PC-3 (cell line): ENCODE measurements at regions of chr14 and their contacts with region 1.

Region 1: DNA sequence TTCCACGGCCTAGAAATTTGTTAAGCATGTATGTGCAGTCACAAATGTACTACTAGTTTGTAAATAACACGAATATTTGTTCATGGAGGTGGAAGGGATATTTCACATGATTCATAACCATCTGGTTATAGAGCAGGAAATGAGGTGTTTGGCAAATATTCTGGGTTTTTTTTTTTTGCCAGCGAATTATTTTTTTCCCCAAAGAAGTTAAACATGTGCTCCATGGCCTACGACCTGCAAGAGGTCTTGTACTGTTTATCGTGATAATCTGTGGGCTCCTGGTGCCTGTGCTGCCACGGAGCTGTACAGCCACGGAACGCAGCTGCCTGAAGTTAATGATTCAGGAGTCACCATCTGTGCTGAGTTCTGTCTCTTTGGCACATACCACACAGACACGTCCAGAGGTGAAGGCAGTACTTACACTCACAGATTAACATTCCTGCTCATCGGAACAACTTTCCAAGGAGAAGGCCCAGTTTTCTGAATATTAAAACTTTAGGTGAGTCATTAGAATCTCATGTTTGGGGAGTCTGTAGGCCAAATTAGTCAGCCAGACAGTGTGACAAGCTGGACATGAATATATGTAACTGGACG is 156.3 kb downstream of the TMX1 start:
- DNase-seq: peak; percentile 99
- ATAC-seq: peak; percentile 48
- H3K4me3 ChIP-seq: peak overlapping the region; percentile 32; the same call in 1 of the 2 replicates
- H3K27ac ChIP-seq: peak overlapping the region; percentile 98
- H3K4me1 ChIP-seq: peaks cover 61% of the 10 kb centered on the region
- H3K27me3 ChIP-seq: no peaks in the 10 kb centered on the region
- CTCF ChIP-seq: no peak

Region 2: DNA sequence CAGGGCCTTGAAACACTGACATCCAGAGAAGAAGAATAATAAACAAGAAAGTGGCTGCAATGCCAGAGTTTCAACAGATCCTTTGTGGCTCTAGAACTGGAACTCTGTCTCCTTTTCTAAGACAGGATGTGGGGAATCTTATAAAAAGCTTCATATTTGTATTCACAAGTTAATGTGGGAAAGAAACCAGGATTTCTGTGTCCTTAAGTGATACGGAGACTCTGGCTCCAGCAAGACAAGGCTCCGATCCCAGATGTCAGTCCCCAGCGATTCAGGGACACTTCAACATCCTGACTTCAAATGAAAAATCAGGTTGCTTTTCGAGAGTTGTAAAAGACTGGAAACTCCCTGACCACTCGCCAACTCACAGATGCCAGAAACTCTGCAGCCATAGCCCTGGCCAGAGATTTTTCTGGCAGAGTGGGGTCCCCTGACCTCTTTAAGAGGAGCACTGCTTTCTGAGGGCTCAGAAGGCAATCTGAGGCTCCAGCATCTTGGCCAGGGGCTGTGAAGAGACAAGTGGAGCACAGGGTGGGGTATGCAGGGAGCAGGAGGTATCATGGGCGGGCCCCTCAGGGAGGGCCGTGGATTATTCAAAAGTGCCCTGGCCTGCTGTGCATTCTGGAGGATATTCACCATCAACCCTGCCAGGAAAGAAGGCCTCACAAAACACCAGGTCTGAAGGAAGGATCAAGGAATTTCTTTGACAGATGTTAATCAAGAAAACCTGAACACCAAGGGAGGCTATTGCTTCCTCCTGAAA is 103.0 kb before region 1 on chr14:
- CTCF ChIA-PET with region 1: no interaction called
- POLR2A ChIA-PET with region 1: no interaction called
- intact Hi-C with region 1: loop called (anchors 2 kb)
- DNase-seq: no peak
- ATAC-seq: no peak
- H3K4me3 ChIP-seq: no peak overlapping the region
- H3K27ac ChIP-seq: no peak overlapping the region
- H3K4me1 ChIP-seq: peaks cover 12% of the 10 kb centered on the region
- H3K27me3 ChIP-seq: no peaks in the 10 kb centered on the region
- CTCF ChIP-seq: no peak

Region 3: GRCh38 chr14:51342241-51342691 is 54.1 kb before region 1 on chr14:
- CTCF ChIA-PET with region 1: no interaction called
- POLR2A ChIA-PET with region 1: no interaction called
- intact Hi-C with region 1: loop called (anchors 1 kb)
- DNase-seq: peak; percentile 97
- ATAC-seq: peak; percentile 97
- H3K4me3 ChIP-seq: no peak overlapping the region
- H3K27ac ChIP-seq: peak overlapping the region; percentile 92
- H3K4me1 ChIP-seq: peaks cover 18% of the 10 kb centered on the region
- H3K27me3 ChIP-seq: no peaks in the 10 kb centered on the region
- CTCF ChIP-seq: no peak

Region 4: DNA sequence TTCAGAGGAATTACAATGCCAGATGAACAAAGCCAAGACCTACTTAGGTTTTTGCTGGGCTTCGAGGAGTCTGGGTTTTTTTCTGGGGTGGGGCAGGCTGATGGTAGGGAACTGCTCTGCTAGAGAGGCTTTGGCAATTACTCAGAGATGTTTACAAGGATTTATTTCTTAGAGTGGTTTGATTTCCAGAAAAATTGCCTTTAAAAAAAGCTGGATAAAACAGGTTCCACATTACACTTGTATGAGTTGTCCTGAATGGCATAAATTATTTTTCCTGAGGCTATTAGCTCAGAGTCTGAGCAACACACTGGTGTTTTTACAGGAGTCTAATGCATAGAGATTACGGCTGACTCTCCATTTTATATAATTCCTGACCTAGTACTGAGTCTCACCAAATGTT is 136.8 kb after region 1 on chr14:
- CTCF ChIA-PET with region 1: no interaction called
- POLR2A ChIA-PET with region 1: interaction called, 6 read pairs
- intact Hi-C with region 1: loop called (anchors 1 kb)
- DNase-seq: peak; percentile 99
- ATAC-seq: peak; percentile 80
- H3K4me3 ChIP-seq: no peak overlapping the region
- H3K27ac ChIP-seq: peak overlapping the region; percentile 96
- H3K4me1 ChIP-seq: peaks cover 31% of the 10 kb centered on the region
- H3K27me3 ChIP-seq: no peaks in the 10 kb centered on the region
- CTCF ChIP-seq: no peak

Region 5: DNA sequence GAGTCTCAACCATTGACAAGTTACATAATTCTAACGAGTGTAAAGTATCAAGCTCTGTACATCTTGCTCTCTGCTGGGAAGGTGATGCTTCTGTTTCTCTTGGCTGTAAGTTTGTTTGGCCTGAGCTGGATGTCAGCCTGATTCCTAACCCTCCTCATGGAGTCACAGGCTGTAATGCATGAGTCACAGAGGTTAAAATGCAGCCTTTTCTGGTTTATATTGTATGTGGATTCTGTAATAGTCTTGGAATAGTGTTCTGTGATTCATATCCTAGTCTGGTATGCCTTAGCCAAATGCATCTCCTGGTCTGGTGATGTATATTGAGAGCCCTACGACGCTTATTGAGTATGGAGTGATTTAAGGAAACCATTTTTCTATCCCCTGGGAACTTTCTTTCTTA is 150.9 kb after region 1 on chr14:
- CTCF ChIA-PET with region 1: interaction called, 3 read pairs
- POLR2A ChIA-PET with region 1: interaction called, 8 read pairs
- intact Hi-C with region 1: loop called (anchors 1 kb)
- DNase-seq: peak; percentile 99
- ATAC-seq: peak; percentile 93
- H3K4me3 ChIP-seq: peak overlapping the region; percentile 9; the same call in 1 of the 2 replicates
- H3K27ac ChIP-seq: peak overlapping the region; percentile 91
- H3K4me1 ChIP-seq: peaks cover 54% of the 10 kb centered on the region
- H3K27me3 ChIP-seq: no peaks in the 10 kb centered on the region
- CTCF ChIP-seq: no peak

Region 6: GRCh38 chr14:51554953-51555352 is 158.6 kb after region 1 on chr14:
- CTCF ChIA-PET with region 1: no interaction called
- POLR2A ChIA-PET with region 1: interaction called, 4 read pairs
- intact Hi-C with region 1: loop called (anchors 1 kb)
- DNase-seq: peak; percentile 67
- ATAC-seq: peak; percentile 50
- H3K4me3 ChIP-seq: peak overlapping the region; percentile 47
- H3K27ac ChIP-seq: peak overlapping the region; percentile 72
- H3K4me1 ChIP-seq: peaks cover 47% of the 10 kb centered on the region
- H3K27me3 ChIP-seq: no peaks in the 10 kb centered on the region
- CTCF ChIP-seq: peak; percentile 67